WTC11 (cell line): ENCODE measurements at regions of chr2 and their contacts with region 1.

Region 1: DNA sequence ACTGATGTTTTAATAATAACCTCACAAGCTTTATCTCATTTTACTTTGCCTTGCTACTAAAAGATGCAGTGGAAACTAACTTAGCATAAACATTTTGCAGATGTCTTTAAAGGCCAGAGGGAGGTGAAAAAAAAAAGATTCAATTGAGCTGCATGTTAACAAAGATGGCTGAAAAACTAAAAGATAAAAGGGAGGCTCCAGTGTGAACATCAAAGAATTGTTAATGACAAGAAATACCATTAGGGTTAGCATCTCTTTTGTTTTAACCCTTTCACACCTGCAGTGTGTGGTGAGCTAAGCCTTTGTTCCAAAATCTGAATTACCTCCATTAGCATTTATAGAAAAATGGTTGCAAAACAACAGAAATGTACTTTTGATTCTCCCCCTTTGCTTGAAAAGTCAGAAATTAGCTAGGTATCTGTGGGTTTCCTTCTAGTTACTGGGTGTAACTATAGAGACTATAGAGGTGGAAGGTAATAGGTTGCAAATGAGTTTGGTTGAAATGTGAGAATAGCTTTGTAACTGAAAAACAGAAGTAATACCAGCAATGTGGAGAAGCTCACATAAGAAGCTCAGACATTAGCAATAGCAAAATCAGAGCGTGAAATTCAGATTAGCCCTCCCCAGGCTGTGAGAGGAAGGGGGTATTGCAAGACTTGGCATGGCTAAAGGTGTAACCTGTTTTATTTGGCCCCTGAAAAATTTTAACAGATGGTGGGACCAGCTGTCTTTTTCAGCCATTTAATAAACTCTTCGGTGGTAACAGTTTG is 34.8 kb upstream of the SP5 start:
- DNase-seq: no peak
- ATAC-seq: peak; percentile 86
- H3K4me3 Mint-ChIP-seq: peak overlapping the region; percentile 51
- H3K27ac Mint-ChIP-seq: peak overlapping the region; percentile 96
- H3K4me1 Mint-ChIP-seq: peaks cover 49% of the 10 kb centered on the region
- H3K27me3 Mint-ChIP-seq: peaks cover 5% of the 10 kb centered on the region
- CTCF ChIP-seq: no peak

Region 2: GRCh38 chr2:170486730-170487129 is 193.6 kb before region 1 on chr2:
- CTCF ChIA-PET with region 1: no interaction called
- POLR2A ChIA-PET with region 1: no interaction called
- DNase-seq: no peak
- ATAC-seq: no peak
- H3K4me3 Mint-ChIP-seq: no peak overlapping the region
- H3K27ac Mint-ChIP-seq: no peak overlapping the region
- H3K4me1 Mint-ChIP-seq: peaks cover 21% of the 10 kb centered on the region
- H3K27me3 Mint-ChIP-seq: no peaks in the 10 kb centered on the region; the same call in 1 of the 2 replicates
- CTCF ChIP-seq: no peak

Region 3: DNA sequence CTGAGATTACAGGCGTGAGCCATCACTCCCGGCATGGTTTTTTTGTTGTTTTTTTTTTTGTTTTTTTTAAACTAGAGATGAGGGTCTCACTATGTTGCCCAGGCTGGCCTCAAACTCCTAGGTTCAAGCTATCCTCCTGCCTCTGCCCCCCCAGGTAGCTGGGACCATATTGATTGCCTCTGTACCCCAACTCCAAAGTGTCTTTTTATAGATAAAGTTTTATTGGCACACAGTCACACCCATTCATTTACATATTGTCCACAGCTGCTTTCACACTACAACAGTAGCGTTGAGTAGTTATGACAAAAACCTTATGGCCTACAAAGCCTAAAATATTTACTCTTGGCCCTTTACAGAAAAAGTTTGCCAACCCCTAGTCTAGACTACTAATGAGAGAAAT is 10.4 kb before region 1 on chr2:
- CTCF ChIA-PET with region 1: interaction called, 13 read pairs
- POLR2A ChIA-PET with region 1: no interaction called
- DNase-seq: no peak
- ATAC-seq: no peak
- H3K4me3 Mint-ChIP-seq: no peak overlapping the region
- H3K27ac Mint-ChIP-seq: no peak overlapping the region; the same call in 1 of the 2 replicates
- H3K4me1 Mint-ChIP-seq: peaks cover 10% of the 10 kb centered on the region
- H3K27me3 Mint-ChIP-seq: no peaks in the 10 kb centered on the region
- CTCF ChIP-seq: no peak